A549 (cell line): ENCODE measurements at regions of chr17 and their contacts with region 1.

Region 1: GRCh38 chr17:996554-997344 is at the start of gene TIMM22:
- DNase-seq: peak; percentile 98 to 100
- ATAC-seq: peak; percentile 97 to 98
- H3K4me3 ChIP-seq: peak within 1 kb of the TSS; percentile 88
- H3K27ac ChIP-seq: peak within 1 kb of the TSS; percentile 84 to 93
- H3K4me1 ChIP-seq: peaks cover 24% of the 10 kb centered on the region
- CTCF ChIP-seq: peak; percentile 97
- EP300 ChIP-seq: no peak
- POLR2A ChIP-seq: peak; percentile 92
- RAD21 ChIP-seq: peak; percentile 95 to 97
- polyA plus RNA-seq, gene TIMM22: 14.7 and 15.8 TPM in 2 replicates

Region 2: DNA sequence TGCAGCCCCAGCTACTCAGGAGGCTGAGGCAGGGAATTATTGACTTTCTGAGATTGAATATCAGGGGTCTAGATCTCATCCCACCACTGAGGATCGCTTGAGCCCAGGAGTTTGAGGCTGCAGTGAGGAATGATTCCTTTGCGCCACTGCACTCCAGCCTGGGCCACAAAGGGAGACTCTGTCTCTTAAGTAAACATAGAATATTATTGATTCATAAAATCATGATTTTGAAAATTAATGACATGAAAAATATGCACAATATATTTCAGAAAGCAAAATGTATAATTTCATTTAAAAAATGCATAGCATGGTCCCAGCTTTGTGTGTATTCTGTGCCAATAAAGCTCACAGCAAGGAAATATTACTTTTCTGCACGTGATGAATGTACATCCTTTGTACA is 280.5 kb before region 1 on chr17:
- CTCF ChIA-PET with region 1: interaction called, 14 read pairs
- POLR2A ChIA-PET with region 1: interaction called, 9 read pairs
- DNase-seq: no peak
- ATAC-seq: no peak
- H3K4me3 ChIP-seq: peak overlapping the region; percentile 70
- H3K27ac ChIP-seq: peak overlapping the region; percentile 79 to 91
- H3K4me1 ChIP-seq: peaks cover 25% of the 10 kb centered on the region
- CTCF ChIP-seq: no peak
- EP300 ChIP-seq: no peak
- POLR2A ChIP-seq: no peak
- RAD21 ChIP-seq: no peak

Region 3: GRCh38 chr17:781805-782731 is 214.7 kb before region 1 on chr17 and contains the starts of genes GLOD4 and MRM3:
- CTCF ChIA-PET with region 1: interaction called, 15 read pairs
- POLR2A ChIA-PET with region 1: interaction called, 13 read pairs
- DNase-seq: peak; percentile 91 to 95
- ATAC-seq: peak; percentile 95 to 96
- H3K4me3 ChIP-seq: peak within 1 kb of the TSS; percentile 96
- H3K27ac ChIP-seq: peak within 1 kb of the TSS; percentile 89 to 91
- H3K4me1 ChIP-seq: peaks cover 22% of the 10 kb centered on the region
- CTCF ChIP-seq: no peak
- EP300 ChIP-seq: no peak
- POLR2A ChIP-seq: peak; percentile 96
- RAD21 ChIP-seq: no peak
- polyA plus RNA-seq, gene GLOD4: 98.3 and 133 TPM in 2 replicates
- polyA plus RNA-seq, gene MRM3: 27.1 and 38.8 TPM in 2 replicates

Region 4: DNA sequence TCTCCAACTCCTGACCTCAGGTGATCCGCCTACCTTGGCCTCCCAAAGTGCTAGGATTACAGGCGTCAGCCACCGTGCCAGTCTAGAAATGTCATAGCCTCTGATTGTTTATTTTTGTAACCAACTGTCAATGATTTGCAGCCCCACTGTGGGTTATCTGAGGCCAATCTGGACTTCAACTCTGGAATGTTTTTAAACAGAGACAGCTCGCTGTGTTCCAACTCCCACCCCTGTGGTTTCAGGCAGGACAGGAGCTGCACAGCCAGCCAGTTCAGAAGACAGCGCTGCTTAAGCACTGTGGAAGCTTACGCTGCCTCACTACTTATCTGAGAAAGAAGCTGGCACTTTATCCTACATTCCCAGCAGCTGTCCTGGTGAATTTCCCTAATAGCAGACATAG is 195.1 kb before region 1 on chr17:
- CTCF ChIA-PET with region 1: interaction called, 31 read pairs
- POLR2A ChIA-PET with region 1: interaction called, 3 read pairs
- DNase-seq: no peak
- ATAC-seq: peak in 1 of 2 experiments; percentile 9; a peak in 1 of 6 replicates
- H3K4me3 ChIP-seq: no peak overlapping the region
- H3K27ac ChIP-seq: no peak overlapping the region; a peak in 1 of 6 replicates
- H3K4me1 ChIP-seq: no peaks in the 10 kb centered on the region
- CTCF ChIP-seq: no peak
- EP300 ChIP-seq: no peak
- POLR2A ChIP-seq: no peak
- RAD21 ChIP-seq: no peak

Region 5: DNA sequence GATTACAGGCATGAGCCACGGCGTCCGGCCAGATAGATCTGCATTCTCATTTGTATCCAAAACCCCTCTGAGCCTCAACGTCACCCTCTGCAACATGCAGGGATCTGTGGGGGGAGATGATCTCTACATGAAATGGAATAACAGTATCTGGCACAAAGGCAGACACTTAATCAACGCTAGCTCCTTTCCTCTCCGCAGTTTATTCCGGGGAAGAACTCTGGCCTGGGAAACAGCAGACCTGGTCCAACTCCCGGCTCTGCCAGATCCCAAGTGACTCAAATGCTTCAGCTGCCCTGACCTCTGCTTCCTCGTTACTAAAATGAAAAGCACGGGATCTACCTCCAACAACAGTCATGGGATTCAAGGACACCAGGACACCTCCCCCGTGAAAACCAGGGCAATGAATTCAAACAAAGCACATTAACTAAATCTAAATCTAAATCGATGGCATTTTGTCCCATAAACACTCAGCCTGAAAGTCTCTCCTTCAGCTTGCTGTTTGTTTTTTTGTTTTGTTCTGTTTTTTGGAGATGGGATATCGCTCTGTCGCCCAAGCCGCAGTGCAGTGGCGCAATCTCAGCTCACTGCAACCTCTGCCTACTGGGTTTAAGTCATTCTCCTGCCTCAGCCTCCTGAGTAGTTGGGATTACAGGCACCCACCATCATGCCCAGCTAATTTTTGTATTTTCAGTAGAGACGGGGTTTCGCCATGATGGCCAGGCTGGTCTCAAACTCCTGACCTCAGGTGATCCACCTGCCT is 95.4 kb before region 1 on chr17:
- CTCF ChIA-PET with region 1: interaction called, 12 read pairs
- POLR2A ChIA-PET with region 1: no interaction called
- DNase-seq: no peak
- ATAC-seq: no peak
- H3K4me3 ChIP-seq: no peak overlapping the region
- H3K27ac ChIP-seq: no peak overlapping the region
- H3K4me1 ChIP-seq: peaks cover 7% of the 10 kb centered on the region; the same call in 1 of the 3 replicates
- CTCF ChIP-seq: no peak
- EP300 ChIP-seq: no peak
- POLR2A ChIP-seq: no peak
- RAD21 ChIP-seq: no peak

Region 6: GRCh38 chr17:1089915-1090314 is 93.2 kb after region 1 on chr17:
- CTCF ChIA-PET with region 1: no interaction called
- POLR2A ChIA-PET with region 1: no interaction called
- DNase-seq: no peak
- ATAC-seq: no peak
- H3K4me3 ChIP-seq: no peak overlapping the region
- H3K27ac ChIP-seq: no peak overlapping the region
- H3K4me1 ChIP-seq: peaks cover 21% of the 10 kb centered on the region
- CTCF ChIP-seq: no peak
- EP300 ChIP-seq: no peak
- POLR2A ChIP-seq: no peak
- RAD21 ChIP-seq: no peak